Left colon (tissue), 2 donors: ENCODE measurements at regions of chr4 and their contacts with region 1.

Region 1: GRCh38 chr4:185597532-185598188 is 62.4 kb upstream of the PDLIM3 start:
- DNase-seq: peak; percentile 38 to 75
- ATAC-seq: peak; percentile 75

Region 2: DNA sequence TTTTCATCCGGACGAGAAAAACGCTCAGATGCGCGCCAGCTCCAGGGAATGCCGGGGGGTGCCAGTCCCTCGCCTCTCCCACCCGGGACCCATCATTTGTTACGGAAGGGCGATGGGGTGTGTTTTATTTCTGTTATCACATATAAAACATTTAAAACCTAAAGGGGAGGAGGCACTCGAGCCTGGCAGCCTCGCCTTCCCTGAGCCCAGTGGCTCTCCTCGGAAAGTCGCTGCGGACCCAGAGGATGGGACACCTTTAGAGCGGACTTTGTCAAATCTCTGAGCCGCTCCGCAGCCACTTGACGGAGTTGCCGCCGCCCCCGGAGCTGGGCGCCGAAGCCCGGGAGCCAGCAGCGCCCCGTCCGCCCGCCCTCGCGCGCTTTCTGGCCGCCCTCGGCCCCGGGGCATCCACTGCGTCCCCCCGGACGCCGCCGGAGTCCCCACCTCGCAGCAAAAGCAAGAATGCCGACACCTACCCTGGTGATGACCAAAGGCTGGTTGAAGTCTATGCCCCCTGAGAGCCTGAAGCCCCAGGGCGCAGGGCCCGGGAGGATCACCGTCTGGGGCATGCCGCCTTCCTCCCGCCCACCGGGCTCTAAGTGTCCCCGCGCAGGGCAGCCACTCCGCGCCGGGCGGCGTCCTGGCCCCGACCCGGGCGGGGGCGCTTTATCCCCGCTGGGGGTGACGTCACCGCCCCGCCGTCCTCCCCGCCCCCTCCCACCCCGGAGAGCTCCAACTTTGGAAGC is 62.6 kb before region 1 on chr4 and contains the start of gene PDLIM3:
- intact Hi-C with region 1: loop called in 1 of 2 experiments (anchors 10 kb)
- DNase-seq: peak in 1 of 2 donors; percentile 45
- ATAC-seq: peak; percentile 62
- total RNA-seq, gene PDLIM3: 4.3 to 30.8 TPM